HEK293T (cell line): ENCODE measurements at regions of chr6 and their contacts with region 1.

Region 1: DNA sequence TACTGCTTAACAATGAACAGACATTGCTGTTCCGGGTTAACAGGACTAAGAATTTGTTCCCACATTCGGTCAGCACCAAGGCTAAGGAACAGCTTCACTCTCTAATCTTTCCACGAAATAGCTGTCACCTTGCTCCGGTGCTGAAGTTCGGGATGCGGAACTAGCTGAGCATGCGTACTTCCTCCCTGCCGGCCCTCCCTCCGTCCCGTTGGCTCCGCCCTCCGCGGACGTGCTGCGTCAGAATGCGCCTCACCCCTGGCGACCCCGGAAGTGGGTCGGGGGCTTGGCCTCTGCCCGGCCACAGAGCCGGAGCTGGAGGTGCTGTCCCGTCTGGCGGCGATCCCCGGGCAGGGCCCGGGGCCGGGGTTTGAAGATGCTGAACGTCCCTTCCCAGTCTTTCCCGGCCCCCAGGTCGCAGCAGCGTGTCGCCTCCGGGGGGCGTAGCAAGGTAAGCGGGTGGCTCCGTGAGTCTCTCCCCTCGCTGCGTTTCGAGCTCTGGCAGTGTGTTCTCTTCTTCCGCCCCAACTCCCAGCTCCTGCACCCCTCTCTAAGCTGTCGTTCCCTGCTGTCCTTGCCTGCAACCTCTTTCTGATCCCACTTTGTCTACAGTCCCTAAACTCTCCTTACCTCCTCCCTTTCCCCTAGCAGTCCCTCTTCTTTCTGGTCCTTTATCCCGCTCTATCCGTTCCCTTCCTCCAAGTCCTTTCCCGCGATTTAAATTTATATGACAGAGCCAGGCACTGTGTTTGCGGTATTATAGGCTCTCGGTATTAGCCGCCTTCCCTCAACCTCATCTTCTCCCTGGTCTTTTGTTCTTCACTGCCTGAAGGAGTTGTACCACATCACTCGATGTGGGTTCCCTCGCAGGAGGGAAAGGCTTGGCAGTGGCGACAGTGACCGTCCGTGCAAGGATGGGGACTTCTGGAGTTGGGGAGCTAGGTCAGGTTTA is at the start of gene CYB5R4:
- DNase-seq: peak; percentile 94

Region 2: DNA sequence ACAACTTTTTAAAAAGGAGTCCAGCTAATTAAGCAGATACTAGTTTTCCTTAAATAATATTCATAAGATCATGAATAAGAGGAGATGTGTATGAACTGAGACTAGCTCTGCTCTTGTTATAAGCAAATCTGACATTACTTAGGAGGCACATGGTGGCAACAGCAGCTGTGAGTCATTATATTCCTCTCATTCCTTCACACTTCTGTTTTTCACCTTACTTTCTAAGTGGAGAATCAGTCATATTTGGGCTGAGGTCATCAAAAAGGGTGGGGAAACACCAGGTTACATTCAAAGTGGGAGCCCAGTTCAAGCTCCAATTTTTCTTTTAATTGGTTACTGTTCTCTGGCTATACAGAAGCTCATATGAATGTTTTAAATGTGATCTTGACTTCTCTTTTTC is 12.5 kb before region 1 on chr6:
- CTCF ChIA-PET with region 1: no interaction called
- POLR2A ChIA-PET with region 1: interaction called, 11 read pairs
- DNase-seq: no peak